CD14-positive monocyte (primary cell): ENCODE measurements at regions of chr18 and their contacts with region 1.

Region 1: DNA sequence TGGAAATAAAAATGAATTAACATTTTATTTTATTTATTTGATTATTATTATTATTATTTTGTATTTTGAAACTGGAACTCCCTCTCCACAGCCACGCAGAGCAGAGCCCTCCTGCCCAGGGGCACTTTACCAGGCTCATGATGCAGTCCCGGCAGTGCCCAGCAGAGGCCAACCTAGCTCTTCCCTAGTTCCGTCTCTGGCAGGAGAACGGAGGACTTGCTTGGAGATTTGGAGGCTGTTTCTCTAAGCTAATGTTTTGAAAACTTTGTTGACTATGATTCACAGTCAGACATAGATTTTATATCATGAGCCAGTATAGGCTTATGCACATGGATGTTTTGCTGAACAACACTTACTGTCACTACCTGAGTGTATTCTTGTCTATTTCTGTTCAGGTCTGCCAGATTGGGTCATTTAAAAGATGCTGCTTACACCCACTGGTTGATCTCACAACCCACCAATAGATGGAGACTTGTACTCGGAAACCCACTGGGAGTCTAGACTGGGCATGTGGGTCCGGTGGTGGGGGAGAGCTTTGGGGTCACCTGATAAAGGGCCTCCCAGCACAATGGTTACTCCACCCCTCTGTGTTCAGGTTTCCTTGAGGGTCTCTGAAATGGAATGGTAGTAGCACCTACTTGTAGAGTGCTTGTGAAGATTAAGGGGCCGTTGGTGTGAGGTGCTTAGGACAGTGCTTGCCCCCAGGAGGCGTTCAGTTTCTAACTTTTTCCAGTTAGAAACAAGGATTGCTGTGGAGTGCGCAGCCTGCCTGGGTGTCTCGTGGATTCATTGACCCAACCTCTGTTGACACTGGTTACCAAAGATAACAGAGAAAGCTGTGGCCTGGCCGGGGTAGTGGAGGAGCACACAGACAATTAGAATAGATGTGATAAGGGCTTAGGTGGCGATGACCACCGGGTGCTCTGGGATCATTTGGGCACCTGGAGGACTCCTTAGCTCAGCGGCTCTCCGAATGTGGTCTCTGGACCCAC is 177.3 kb downstream of the HAUS1 start:
- DNase-seq: peak; percentile 47 to 64 (median 57)
- H3K4me3 ChIP-seq: no peak overlapping the region
- H3K4me3 Mint-ChIP-seq: no peak overlapping the region
- H3K27ac ChIP-seq: no peak overlapping the region
- H3K27ac Mint-ChIP-seq: peak overlapping the region in 2 of 7 donors; percentile 23 to 28
- H3K4me1 ChIP-seq: no peaks in the 10 kb centered on the region
- H3K4me1 Mint-ChIP-seq: no peaks in the 10 kb centered on the region
- H3K27me3 ChIP-seq: no peaks in the 10 kb centered on the region
- H3K27me3 Mint-ChIP-seq: peaks cover 0 to 8% (median 2%) of the 10 kb centered on the region in 3 donors
- CTCF ChIP-seq: peak; percentile 95

Region 2: GRCh38 chr18:46196627-46197243 is 84.7 kb before region 1 on chr18:
- intact Hi-C with region 1: no loop called
- DNase-seq: no peak
- H3K4me3 ChIP-seq: no peak overlapping the region
- H3K4me3 Mint-ChIP-seq: no peak overlapping the region
- H3K27ac ChIP-seq: no peak overlapping the region
- H3K27ac Mint-ChIP-seq: peak overlapping the region in 2 of 7 donors; percentile 26 to 34
- H3K4me1 ChIP-seq: peaks cover 8 to 16% of the 10 kb centered on the region in 2 donors
- H3K4me1 Mint-ChIP-seq: peaks cover 31% of the 10 kb centered on the region
- H3K27me3 ChIP-seq: no peaks in the 10 kb centered on the region
- H3K27me3 Mint-ChIP-seq: no peaks in the 10 kb centered on the region
- CTCF ChIP-seq: no peak

Region 3: GRCh38 chr18:46220116-46220515 is 61.4 kb before region 1 on chr18:
- intact Hi-C with region 1: no loop called
- DNase-seq: no peak
- H3K4me3 ChIP-seq: no peak overlapping the region
- H3K4me3 Mint-ChIP-seq: no peak overlapping the region
- H3K27ac ChIP-seq: no peak overlapping the region
- H3K27ac Mint-ChIP-seq: peak overlapping the region in 1 of 7 donors; percentile 7
- H3K4me1 ChIP-seq: peaks cover 17 to 21% of the 10 kb centered on the region in 2 donors
- H3K4me1 Mint-ChIP-seq: peaks cover 24% of the 10 kb centered on the region
- H3K27me3 ChIP-seq: no peaks in the 10 kb centered on the region
- H3K27me3 Mint-ChIP-seq: no peaks in the 10 kb centered on the region
- CTCF ChIP-seq: no peak

Region 4: GRCh38 chr18:46481048-46481846 is 199.8 kb after region 1 on chr18:
- intact Hi-C with region 1: loop called (anchors 2 to 5 kb)
- DNase-seq: peak; percentile 7 to 14 (median 14)
- H3K4me3 ChIP-seq: no peak overlapping the region
- H3K4me3 Mint-ChIP-seq: no peak overlapping the region
- H3K27ac ChIP-seq: no peak overlapping the region
- H3K27ac Mint-ChIP-seq: peak overlapping the region in 1 of 7 donors; percentile 27
- H3K4me1 ChIP-seq: no peaks in the 10 kb centered on the region
- H3K4me1 Mint-ChIP-seq: no peaks in the 10 kb centered on the region
- H3K27me3 ChIP-seq: no peaks in the 10 kb centered on the region
- H3K27me3 Mint-ChIP-seq: peaks cover 5% of the 10 kb centered on the region in 3 donors
- CTCF ChIP-seq: peak; percentile 69